Activated naive CD4-positive, alpha-beta T cell treated with anti-CD3 and anti-CD28 coated beads for 36 hours (primary cell): ENCODE measurements at regions of chr1 and their contacts with region 1.

Region 1: DNA sequence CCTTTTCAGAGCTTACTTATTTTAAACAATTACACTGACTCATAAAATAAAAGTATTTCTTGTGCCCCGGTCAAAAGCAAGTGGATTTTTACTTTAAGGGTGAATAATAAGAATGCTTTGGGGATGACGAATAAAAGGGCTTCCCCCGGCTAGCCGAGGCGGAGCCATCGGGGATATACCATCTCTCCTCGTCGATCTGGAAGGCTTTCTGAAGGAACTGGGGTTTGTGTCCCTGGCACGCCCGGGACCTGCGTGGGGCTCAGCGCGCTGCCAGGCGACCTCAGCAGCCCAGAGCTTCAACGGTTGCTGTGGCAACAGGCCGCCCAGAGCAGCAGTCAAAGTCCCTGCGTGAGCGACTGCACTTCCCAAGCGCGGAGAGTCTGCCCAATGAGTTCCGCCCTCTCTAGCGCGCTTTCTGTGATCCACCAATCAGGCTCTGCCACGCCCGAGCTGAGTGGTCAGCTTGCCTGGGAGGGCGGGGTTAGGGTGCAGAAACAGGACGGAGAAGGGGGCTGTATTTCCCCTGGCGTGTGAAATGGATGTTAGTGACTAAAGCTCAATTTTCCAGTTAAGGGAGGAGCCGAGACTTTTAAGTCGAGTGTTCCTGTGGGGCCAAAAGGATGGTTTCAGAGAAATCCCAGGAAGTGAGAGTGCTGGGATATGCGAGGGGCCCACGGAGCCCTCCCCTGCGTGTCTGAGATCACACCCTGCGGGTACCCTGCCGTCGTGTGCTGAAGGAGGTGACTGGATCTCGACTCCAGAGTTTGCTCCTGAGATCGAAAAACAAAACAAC is 33.0 kb upstream of the MGST3 start:
- DNase-seq: peak; percentile 98
- H3K4me3 Mint-ChIP-seq: peak overlapping the region; percentile 89
- H3K27ac Mint-ChIP-seq: peak overlapping the region; percentile 89
- H3K4me1 Mint-ChIP-seq: peaks cover 21% of the 10 kb centered on the region
- H3K27me3 Mint-ChIP-seq: peaks cover 19% of the 10 kb centered on the region

Region 2: DNA sequence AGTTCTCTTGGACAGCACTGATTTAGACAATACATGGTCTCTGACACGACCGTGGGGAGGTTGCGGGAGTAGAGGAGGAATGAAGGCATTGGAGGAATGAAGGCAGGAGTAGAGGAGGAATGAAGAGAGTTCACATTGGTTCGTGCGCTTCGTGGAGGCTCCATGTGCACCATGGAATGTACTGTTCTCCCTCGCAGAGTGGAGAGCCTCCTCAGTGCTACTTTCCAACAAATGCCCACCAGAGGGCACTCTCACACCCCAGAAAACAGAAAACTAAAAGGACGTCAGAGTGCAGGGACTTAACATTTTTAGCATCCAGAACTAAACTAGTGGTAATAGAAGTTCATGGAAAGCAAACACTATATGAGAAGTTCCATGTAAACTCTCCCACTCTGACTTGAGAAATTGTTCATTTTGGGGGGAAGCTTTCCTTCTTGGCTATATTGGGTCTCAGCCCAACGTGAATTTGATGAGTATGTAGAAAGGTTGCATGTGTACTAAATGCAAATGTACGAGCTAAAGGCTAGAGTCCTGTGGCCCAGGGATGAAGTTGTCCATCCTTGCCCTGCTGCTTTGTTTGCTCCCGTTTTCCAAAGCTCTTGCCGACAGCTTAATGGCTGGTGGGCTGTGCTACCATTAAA is 453.2 kb before region 1 on chr1:
- CTCF ChIA-PET with region 1: no interaction called
- intact Hi-C with region 1: loop called (anchors 1 kb)
- DNase-seq: peak; percentile 59
- H3K4me3 Mint-ChIP-seq: no peak overlapping the region
- H3K27ac Mint-ChIP-seq: no peak overlapping the region
- H3K4me1 Mint-ChIP-seq: no peaks in the 10 kb centered on the region
- H3K27me3 Mint-ChIP-seq: peaks cover 30% of the 10 kb centered on the region

Region 3: DNA sequence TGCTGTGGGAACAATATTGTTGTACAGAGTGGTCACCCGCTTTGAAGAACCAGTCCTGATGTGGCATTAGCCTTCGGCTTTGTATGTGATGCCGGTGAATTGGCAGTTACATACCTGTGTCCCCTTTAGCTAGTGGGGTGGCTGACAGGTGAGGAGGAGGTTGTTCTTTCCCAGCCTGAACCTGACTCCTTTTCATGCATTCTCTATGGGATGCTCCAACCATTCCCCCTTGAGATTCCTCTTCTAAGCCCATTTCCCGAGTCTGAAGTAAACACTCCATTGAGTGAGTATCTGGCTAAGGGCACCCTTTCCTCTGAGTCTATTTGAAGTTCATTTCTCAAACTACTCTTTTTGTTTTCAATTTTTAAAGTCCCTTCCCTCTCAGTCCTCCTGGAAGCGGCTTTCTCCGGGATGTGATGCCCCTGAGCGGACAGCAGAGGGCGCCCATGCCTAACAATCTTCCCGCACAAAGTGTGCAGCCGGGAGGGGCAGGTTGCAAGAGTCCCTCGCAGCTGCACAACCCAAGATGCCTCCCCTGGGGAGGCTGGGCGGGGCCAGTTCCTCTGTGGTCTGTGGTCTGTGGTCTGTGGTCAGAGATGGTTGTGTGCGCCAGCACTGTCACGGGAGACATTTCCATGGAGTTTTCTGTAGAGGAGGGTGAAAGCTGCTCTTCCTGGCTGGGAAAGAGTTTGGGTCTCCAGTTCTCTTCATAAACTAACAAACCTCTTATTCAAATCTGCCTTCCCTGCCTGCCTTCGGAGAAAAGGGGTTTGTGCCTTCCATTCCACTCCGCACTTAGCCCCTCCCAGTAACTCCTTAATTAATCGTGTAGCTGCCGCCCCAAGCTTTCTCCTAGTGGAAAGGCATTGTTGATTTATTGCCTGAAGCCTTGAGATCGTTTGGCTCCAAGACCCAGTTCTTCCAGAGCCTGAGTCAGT is 205.2 kb before region 1 on chr1:
- CTCF ChIA-PET with region 1: interaction called, 99 read pairs
- intact Hi-C with region 1: loop called (anchors 1 kb)
- DNase-seq: peak; percentile 91
- H3K4me3 Mint-ChIP-seq: peak overlapping the region; percentile 52
- H3K27ac Mint-ChIP-seq: peak overlapping the region; percentile 61
- H3K4me1 Mint-ChIP-seq: peaks cover 15% of the 10 kb centered on the region
- H3K27me3 Mint-ChIP-seq: peaks cover 54% of the 10 kb centered on the region

Region 4: GRCh38 chr1:165560883-165561656 is 37.0 kb before region 1 on chr1:
- CTCF ChIA-PET with region 1: no interaction called
- intact Hi-C with region 1: no loop called
- DNase-seq: no peak
- H3K4me3 Mint-ChIP-seq: no peak overlapping the region
- H3K27ac Mint-ChIP-seq: no peak overlapping the region
- H3K4me1 Mint-ChIP-seq: no peaks in the 10 kb centered on the region
- H3K27me3 Mint-ChIP-seq: peaks cover 12% of the 10 kb centered on the region

Region 5: GRCh38 chr1:165576536-165576935 is 21.5 kb before region 1 on chr1:
- CTCF ChIA-PET with region 1: no interaction called
- intact Hi-C with region 1: no loop called
- DNase-seq: no peak
- H3K4me3 Mint-ChIP-seq: no peak overlapping the region
- H3K27ac Mint-ChIP-seq: no peak overlapping the region
- H3K4me1 Mint-ChIP-seq: no peaks in the 10 kb centered on the region
- H3K27me3 Mint-ChIP-seq: peaks cover 2% of the 10 kb centered on the region

Region 6: GRCh38 chr1:165679282-165680036 is 81.4 kb after region 1 on chr1:
- CTCF ChIA-PET with region 1: interaction called, 3 read pairs
- intact Hi-C with region 1: loop called (anchors 2 kb)
- DNase-seq: peak; percentile 11
- H3K4me3 Mint-ChIP-seq: no peak overlapping the region
- H3K27ac Mint-ChIP-seq: peak overlapping the region; percentile 62
- H3K4me1 Mint-ChIP-seq: peaks cover 24% of the 10 kb centered on the region
- H3K27me3 Mint-ChIP-seq: no peaks in the 10 kb centered on the region

Region 7: DNA sequence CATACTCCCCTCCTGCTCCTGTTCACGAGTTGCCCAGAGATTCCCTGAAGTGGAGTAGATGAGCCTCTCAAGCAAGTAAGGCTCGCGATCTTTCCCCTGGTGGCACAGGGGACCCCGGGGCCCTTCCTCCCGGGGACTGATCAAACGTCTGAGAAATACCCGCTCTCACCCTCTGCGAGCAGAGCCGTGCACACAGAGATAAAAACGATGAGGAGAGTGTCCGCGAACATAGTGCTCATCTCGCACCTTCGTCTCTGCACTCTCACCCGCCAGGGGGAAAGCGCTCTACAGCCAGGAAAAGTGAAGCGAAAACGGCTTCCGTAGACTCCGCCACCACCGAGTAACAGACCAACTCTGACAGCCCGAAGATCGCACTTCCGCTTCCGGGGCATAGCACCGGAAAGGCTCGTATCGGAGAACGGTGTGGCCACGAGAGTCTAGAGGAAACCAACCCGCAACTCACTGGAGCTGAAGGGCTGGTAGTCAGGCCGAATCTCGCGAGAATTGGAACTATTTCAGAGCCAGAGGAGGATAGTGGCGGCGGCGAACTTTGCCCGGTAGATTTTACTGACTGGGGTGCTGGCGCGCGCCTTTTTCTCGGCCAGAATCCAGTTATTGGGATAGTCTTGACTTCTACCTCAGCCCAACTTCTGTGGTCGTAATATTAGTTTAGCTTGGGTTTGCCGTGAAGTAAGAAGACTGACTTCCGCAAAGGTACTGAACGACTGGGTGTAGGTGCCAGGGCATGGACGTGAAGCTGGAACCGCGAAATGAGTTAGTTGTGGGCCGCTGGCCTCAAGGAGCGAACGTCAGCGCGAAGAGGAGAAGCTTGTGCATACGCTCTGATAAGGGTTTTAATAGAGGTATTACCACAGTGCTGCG is 170.7 kb after region 1 on chr1 and contains the start of gene TMCO1:
- CTCF ChIA-PET with region 1: interaction called, 8 read pairs
- intact Hi-C with region 1: loop called (anchors 1 kb)
- DNase-seq: peak; percentile 96
- H3K4me3 Mint-ChIP-seq: peak within 1 kb of the TSS; percentile 98
- H3K27ac Mint-ChIP-seq: peak within 1 kb of the TSS; percentile 97
- H3K4me1 Mint-ChIP-seq: peaks cover 49% of the 10 kb centered on the region
- H3K27me3 Mint-ChIP-seq: no peaks in the 10 kb centered on the region
- total RNA-seq, gene TMCO1: 50.5 to 50.7 TPM

Region 8: DNA sequence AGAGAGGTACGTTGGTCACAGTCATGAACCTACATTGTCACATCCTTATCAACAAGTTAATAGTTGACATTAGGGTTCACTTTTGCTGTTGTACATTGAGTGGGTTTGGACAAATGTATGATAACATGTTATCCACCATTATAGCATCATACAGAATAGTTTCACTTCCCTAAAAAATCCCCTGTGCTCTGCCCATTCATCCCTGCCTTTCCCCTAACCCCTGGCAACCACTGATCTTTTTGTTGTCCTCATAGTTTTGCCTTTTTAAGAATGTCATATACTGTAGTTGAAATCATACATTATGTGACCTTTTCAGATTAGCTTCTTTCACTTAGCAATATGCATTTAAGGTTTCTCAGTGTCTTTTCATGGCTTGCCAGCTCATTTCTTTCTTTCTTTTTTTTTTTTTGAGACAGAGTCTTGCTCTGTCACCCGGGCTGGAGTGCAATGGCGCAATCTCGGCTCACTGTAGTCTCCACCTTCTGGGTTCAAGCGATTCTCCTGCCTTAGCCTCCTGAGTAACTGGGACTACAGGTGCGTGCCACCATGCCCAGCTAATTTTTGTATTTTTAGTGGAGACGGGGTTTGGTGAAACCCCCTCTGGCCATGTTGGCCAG is 280.0 kb after region 1 on chr1:
- CTCF ChIA-PET with region 1: no interaction called
- intact Hi-C with region 1: loop called (anchors 2 kb)
- DNase-seq: peak; percentile 31
- H3K4me3 Mint-ChIP-seq: no peak overlapping the region
- H3K27ac Mint-ChIP-seq: no peak overlapping the region
- H3K4me1 Mint-ChIP-seq: peaks cover 44% of the 10 kb centered on the region
- H3K27me3 Mint-ChIP-seq: peaks cover 1% of the 10 kb centered on the region